ENCODE measurements at regions of chr11 and their contacts with region 1.

Region 1: DNA sequence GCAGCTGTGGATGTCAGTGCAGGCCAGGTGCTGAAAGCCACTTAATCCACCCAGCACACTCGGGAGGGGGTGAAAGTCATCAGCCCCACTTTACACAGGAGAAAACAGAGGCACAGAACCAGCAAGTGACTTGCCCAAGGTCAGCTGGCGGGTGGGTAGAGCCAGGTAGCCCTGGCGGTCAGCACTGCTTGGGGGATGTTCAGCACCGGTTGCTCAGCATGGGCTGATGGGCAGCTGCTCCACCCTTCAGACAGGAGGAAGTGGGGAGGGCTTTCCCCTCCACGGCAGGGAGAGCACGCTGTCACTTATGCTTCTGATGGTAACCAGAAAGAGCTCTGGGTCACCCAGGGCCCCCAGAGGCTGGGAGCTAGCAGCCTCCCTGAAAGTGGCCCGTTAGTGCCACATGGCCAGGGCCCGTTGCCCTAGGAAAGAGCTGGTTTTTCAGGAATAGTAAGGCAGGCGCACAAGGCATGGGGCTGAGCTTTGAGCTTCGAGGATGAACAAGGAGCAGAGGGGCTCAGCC is 417.9 kb downstream of the CTTN start:
- DNase-seq: no peak
- ATAC-seq: peak in 1 of 2 experiments; percentile 8; a peak in 1 of 6 replicates
- H3K4me3 ChIP-seq: no peak overlapping the region
- H3K27ac ChIP-seq: no peak overlapping the region
- H3K4me1 ChIP-seq: no peaks in the 10 kb centered on the region
- CTCF ChIP-seq: no peak
- EP300 ChIP-seq: no peak
- POLR2A ChIP-seq: no peak
- RAD21 ChIP-seq: no peak

Region 2: DNA sequence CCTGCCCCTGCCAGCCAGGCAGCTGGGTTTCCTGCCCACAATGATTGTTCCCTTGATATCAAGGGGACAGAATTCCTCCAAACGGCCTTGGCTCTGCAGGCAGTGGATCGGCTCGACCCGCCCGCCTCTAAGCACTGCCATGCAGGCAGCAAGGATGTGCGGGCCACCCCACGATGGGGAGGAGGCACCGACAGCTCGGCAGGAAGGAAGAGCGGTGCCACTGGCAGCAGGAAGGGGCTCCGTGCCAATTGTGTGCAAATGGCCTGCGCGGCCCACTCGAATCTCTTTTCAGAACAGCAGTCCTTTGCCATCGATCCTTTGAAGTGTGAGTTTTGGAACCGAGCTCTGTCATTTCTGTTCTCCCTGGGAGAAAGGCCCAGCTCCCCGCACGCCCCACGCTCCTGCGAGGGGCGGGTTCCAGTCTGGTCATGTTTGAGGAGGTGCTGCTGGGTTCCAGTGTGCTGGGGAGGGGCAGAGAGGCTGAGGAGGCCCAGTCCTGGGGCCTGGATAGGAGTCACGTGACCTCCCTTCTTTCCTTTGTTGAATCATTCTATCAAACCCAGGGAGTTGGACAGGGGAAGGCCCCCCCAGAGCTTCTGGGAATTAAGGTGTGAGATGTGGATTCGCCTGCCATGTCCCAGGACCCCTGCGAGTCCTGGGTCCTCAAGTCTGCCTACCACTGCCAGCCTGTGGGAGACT is 11.9 kb before region 1 on chr11:
- CTCF ChIA-PET with region 1: interaction called, 25 read pairs
- POLR2A ChIA-PET with region 1: no interaction called
- DNase-seq: no peak
- ATAC-seq: no peak
- H3K4me3 ChIP-seq: no peak overlapping the region
- H3K27ac ChIP-seq: no peak overlapping the region
- H3K4me1 ChIP-seq: no peaks in the 10 kb centered on the region
- CTCF ChIP-seq: no peak
- EP300 ChIP-seq: no peak
- POLR2A ChIP-seq: no peak
- RAD21 ChIP-seq: no peak

Region 3: DNA sequence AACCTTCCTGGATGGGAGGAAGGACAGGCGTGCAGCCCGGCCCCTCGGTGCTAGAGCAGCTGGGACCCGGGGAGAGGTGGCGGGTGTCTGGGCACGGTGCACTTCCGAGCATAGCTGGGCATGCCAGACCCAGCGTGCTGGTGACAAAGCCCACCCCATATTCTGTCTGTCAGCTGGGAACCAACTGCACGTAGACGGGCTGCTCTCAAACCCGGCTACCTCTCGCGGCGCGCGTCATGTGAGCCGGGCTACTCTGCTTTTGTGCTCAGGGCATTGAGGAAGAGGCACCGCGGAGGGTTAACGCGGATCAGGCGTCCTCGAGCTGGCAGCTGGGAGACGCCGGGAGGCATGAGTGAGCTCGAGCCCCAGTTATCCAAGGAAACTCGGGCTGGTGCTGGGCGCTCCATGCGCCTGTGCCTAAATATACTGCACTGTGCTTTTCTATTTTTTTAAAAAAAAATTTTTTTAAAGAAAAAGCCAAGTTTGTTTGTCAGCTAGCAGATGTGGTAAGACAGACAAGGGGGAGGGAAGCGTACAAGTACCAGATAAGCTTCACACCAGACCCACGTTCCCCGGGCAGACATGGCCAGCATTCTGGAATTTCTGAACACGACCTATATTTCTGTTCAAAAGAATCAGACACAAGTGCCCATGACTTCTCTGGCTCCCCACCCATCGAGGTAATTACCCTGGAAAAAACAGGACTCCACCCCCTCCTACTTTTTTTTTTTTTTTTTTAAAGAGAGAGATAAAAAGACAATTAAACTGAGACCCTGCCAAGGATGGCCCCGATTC is 10.5 kb after region 1 on chr11:
- CTCF ChIA-PET with region 1: interaction called, 25 read pairs
- POLR2A ChIA-PET with region 1: no interaction called
- DNase-seq: no peak
- ATAC-seq: no peak
- H3K4me3 ChIP-seq: no peak overlapping the region
- H3K27ac ChIP-seq: no peak overlapping the region
- H3K4me1 ChIP-seq: no peaks in the 10 kb centered on the region
- CTCF ChIP-seq: no peak
- EP300 ChIP-seq: no peak
- POLR2A ChIP-seq: no peak
- RAD21 ChIP-seq: no peak

Region 4: DNA sequence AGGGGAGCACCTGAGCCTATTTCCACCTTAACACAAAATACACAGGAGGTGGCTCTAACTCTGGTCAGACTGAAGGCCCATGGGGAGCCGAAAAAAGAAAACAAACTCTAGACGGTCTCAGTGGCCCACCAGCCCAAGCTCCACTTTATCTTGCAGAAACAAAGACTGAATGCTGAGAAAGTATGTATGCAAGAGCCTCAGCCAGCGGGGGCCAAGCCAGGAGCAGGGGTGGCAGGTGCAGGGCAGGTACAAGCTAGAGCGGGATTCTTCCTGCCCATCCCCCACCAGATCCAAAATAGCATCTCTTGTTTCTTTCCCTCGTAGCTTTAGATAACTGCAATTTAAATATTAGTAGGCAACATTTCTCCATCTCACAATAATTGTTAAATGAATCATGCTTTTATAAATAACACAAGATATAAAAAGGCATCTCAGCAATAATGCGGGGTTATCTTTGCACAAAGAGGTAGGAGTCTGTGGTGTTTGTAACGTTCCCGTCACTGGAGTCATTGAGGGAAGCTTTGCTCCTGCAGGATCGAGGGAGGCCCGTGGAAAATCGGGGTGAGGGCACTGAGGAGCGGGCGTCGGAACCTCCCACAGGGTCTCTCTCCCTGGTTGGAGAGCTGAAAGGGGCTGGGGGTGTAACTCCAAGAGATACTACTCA is 18.2 kb after region 1 on chr11:
- CTCF ChIA-PET with region 1: interaction called, 25 read pairs
- POLR2A ChIA-PET with region 1: no interaction called
- DNase-seq: no peak
- ATAC-seq: no peak
- H3K4me3 ChIP-seq: no peak overlapping the region
- H3K27ac ChIP-seq: no peak overlapping the region
- H3K4me1 ChIP-seq: no peaks in the 10 kb centered on the region
- CTCF ChIP-seq: no peak
- EP300 ChIP-seq: no peak
- POLR2A ChIP-seq: no peak
- RAD21 ChIP-seq: no peak

Measured in A549 (cell line).